Sigmoid colon (tissue), 7 donors: ENCODE measurements at regions of chr2 and their contacts with region 1.

Region 1: DNA sequence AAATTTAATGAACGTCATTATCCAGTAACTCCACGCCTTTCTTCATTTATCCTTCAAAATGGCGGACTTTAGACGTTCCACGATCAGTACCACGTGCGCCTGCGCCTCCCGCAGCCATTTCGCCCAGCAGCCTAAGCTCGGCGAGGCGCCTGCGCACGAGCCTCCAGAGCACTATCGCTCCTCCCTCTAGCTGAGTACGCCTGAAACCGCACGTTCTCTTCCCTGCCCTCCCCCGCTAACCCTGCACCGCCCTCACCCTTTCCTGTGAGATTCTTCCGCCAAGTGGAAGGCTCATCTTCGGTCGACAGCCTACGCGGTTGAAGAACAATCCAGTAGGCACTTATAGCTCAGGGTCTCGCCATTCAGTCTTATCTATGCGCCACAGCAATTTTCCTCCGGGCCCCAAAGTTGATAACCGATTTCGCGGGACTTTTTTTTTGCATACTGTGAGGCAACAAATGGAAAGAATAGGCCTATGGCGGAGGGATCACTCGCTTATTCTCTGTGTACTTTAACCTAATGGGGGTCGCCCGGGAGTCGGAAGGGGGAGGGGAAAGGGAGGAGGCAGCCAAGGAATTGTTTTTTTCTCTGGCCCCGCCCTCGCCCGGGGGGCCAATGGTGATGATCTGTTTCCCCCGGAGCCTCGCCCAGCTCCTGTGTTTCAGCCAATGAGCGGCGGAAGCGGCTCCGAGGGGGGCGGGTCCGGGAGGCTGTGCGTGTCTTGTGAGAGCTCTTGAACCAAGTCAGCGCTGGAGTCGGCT is at the start of gene KDM3A:
- DNase-seq: peak; percentile 100
- H3K4me3 ChIP-seq: peak within 1 kb of the TSS; percentile 62 to 88 (median 80)
- H3K27ac ChIP-seq: peak within 1 kb of the TSS; percentile 95 to 98 (median 97)
- H3K4me1 ChIP-seq: peaks cover 2 to 31% (median 30%) of the 10 kb centered on the region in 4 donors
- H3K27me3 ChIP-seq: no peaks in the 10 kb centered on the region
- CTCF ChIP-seq: no peak
- EP300 ChIP-seq: peak in 3 of 4 donors; percentile 56 to 64 (median 60)
- POLR2A ChIP-seq: peak; percentile 88 to 94
- total RNA-seq, gene KDM3A: 31.6 to 61.2 (median 49.8) TPM

Region 2: DNA sequence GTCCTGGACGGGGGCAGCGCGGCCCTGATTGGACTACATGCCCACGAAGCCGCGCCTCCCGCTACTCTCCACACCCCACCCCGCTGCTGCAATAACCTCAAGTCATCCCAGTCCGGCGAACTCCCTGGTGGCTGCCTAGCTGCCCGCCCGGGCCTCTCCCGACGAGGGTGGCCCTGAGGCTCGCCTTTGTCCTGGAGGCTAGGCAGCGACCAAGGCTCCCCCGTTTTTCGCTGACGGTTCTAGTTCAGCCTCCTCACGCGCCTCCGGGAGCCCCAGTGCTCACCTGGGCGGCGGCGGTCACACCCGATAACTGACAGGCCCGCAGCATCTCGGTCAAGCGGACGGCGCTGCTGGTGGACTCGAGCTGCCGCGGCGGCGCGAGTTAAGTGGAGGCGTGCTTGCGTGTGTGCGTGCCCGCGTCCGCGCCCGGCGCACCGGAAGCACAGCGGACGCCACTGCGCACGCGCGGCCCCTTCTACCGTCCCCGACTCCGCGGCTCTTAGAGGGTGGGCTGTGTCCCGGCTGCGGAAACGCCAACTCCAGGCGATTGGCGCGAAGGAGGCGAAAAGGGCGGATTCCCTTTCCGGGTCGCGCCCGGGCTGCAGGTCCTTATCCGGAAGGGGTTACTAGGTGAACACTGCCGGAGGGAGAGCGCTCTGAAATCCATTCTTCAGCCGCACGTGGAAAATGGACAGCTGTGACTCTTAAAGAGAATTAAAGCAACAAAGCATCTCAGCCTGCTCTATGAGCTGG is 245.6 kb before region 1 on chr2 and contains the start of gene IMMT:
- intact Hi-C with region 1: loop called (anchors 5 kb)
- DNase-seq: peak; percentile 98
- H3K4me3 ChIP-seq: peak within 1 kb of the TSS; percentile 85 to 96 (median 90)
- H3K27ac ChIP-seq: peak within 1 kb of the TSS; percentile 99 to 100 (median 100)
- H3K4me1 ChIP-seq: peaks cover 0 to 60% (median 55%) of the 10 kb centered on the region in 4 donors
- H3K27me3 ChIP-seq: no peaks in the 10 kb centered on the region
- CTCF ChIP-seq: no peak
- EP300 ChIP-seq: peak in 2 of 4 donors; percentile 5 to 16
- POLR2A ChIP-seq: peak; percentile 89 to 90
- total RNA-seq, gene IMMT: 46.1 to 48.2 (median 48.2) TPM

Region 3: DNA sequence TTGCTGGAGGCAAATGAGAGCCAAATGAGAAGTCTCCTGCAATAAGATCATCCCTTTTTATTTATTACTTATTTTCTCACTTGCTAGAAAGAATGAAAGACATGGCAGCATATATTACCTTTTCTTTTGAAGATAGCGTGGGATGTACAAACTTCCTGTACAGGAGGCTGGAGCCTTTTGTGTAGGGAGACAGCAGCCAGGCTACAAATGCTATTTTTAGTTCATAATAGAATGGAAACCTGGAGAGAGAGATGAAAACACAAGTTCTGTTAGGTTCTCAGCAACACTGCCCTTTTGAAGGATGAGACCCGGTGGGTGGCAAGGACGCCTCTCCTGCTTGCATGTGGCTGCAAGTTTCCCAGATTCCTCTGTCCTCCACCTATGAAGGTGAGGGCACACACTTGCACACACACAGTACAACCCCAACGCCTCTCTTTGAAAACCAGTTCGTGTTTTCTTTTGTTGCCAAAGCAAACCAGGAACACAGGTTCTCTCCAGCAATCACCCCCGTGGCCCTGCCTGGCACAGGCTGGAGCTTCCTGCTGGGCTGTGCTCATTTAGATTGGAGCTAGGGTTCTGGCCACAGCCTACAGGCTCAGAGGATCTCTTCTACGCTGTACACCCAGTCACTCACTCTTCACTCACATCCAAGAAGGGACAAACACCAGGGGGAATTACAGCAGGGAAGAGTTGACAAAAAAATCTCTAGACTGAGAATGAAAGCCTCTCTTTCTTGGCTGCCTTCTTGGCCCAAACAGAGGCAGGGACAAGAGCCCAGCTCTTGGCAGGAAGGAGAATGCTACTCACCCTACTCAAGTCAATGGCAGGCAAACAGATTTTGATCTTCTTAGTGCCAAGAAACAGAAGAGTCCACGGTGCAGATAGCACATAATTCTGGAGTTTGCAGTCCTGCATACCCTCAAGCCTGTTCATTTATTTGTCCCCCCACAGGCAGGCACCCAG is 186.0 kb before region 1 on chr2:
- intact Hi-C with region 1: no loop called
- DNase-seq: peak; percentile 74
- H3K4me3 ChIP-seq: no peak overlapping the region
- H3K27ac ChIP-seq: peak overlapping the region; percentile 69 to 85 (median 76)
- H3K4me1 ChIP-seq: peaks cover 0 to 64% (median 52%) of the 10 kb centered on the region in 4 donors
- H3K27me3 ChIP-seq: no peaks in the 10 kb centered on the region
- CTCF ChIP-seq: no peak
- EP300 ChIP-seq: no peak
- POLR2A ChIP-seq: no peak

Region 4: GRCh38 chr2:86352137-86352726 is 88.6 kb before region 1 on chr2:
- intact Hi-C with region 1: no loop called
- DNase-seq: no peak
- H3K4me3 ChIP-seq: no peak overlapping the region
- H3K27ac ChIP-seq: no peak overlapping the region
- H3K4me1 ChIP-seq: no peaks in the 10 kb centered on the region
- H3K27me3 ChIP-seq: no peaks in the 10 kb centered on the region
- CTCF ChIP-seq: no peak
- EP300 ChIP-seq: no peak
- POLR2A ChIP-seq: no peak

Region 5: DNA sequence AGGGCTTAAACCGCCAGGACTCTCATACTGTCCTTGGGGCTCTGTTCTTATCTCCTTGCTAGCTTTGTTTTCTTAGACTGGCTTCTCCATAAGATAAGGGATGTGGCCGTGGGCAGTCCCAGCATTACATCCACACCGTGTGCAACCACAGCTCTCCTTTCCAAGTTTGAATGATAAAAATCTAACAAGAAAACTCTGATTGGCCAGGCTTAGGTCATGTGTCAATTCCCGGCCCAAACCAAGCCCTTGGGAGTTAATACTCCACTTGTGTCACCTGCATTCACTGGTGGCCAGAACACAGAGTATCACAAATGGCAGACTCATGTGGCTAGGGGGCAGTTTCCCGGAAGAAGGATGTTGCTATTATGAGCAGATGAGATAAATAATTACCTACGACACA is 42.8 kb before region 1 on chr2:
- intact Hi-C with region 1: no loop called
- DNase-seq: no peak
- H3K4me3 ChIP-seq: no peak overlapping the region
- H3K27ac ChIP-seq: no peak overlapping the region
- H3K4me1 ChIP-seq: peaks cover 0 to 11% (median 8%) of the 10 kb centered on the region in 4 donors
- H3K27me3 ChIP-seq: no peaks in the 10 kb centered on the region
- CTCF ChIP-seq: no peak
- EP300 ChIP-seq: no peak
- POLR2A ChIP-seq: no peak

Region 6: DNA sequence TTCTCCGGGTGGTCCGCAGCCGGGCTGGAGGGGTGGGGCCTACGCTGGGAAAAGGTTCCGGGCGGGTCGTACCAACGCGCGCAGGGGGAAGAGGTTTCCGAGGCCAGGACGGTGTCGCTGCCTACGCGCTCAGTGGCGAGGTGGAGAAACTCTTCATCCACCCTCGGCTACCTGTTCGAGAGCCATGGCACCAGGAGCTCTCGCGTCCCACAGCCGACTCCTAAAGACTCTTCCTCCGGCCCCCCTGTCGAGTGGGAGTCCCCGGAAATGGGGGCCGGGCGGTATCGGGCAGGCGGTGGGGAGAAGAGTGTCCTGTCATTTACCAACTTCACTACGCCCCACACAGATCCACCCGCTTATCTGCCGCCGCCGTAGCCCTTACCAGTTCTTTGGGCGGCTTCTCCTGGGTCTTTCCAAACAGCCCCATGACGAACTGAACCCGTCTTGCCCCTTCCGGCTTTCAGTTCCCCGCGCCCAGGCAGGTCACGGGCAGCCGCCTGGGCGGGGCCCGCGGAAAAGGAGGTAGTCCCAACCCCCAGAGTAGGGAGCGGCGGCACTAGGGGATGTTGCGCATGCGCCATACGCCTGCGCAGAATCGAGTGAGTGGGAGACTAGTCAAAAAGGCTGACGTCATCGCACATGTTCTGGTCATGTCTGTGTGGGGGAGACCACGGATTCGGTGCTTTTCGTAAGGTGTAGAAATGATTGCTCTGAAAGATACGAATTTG is 122.3 kb after region 1 on chr2 and contains the start of gene CHMP3:
- intact Hi-C with region 1: loop called (anchors 5 kb)
- DNase-seq: peak; percentile 99
- H3K4me3 ChIP-seq: peak within 1 kb of the TSS; percentile 64 to 94 (median 84)
- H3K27ac ChIP-seq: peak within 1 kb of the TSS; percentile 97 to 100 (median 98)
- H3K4me1 ChIP-seq: peaks cover 0 to 24% (median 18%) of the 10 kb centered on the region in 4 donors
- H3K27me3 ChIP-seq: no peaks in the 10 kb centered on the region
- CTCF ChIP-seq: no peak
- EP300 ChIP-seq: no peak
- POLR2A ChIP-seq: peak; percentile 63 to 72
- total RNA-seq, gene CHMP3: 101 to 154 (median 138) TPM